HEK293T (cell line): ENCODE measurements at regions of chrX and their contacts with region 1.

Region 1: DNA sequence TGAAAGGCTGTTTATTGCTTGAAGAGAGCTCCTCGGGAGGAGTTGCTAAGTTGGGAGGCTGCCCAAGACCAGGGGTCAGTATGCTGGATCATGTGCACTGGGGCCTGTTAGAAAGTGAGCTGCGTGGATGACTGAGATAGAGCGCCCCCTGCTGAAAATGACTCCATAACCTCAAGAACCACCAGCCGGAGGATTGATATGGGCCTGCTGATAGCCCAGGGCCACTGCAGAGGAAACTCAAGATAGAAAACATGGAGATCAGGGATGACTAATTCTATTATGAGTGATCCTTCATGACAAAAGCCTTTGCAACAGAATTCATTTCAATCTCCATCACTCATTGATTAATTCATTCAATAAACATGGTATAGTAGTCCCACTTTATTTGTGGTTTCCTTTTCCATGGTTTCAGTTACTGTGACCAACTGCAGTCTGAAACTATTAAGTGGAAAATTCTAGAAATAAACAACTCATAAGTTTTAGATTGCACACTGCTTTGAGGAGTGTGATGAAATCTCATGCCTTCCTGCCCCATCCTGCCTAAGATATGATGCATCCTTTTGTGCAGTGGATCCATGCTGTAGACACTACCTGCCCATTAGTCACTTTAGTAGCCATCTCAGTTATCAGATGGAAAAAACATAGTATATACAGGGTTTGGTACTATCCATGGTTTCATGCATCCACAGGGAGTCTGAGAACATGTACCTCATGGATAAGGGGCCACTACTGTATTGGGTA is 126.7 kb upstream of the MBNL3 start:
- DNase-seq: peak; percentile 68

Region 2: DNA sequence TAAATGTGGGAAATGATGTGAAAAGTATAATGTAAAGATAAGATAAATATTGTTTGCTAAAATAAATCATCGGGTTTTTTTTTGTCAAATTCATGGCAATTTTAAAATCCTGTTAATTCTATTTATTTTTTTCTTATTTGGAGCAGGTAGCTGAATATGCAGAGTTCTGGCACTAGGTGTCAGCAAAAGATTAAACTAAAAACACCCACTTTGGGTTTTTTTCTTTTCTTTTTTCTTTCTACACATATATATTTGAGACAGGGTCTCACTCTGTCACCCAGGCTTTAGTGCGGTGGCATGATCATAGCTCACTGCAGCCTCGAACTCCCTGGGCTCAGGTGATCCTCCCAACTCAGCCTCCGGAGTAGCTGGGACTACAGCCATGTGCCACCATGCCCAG is 389.4 kb before region 1 on chrX:
- CTCF ChIA-PET with region 1: interaction called, 13 read pairs
- POLR2A ChIA-PET with region 1: no interaction called
- DNase-seq: no peak

Region 3: DNA sequence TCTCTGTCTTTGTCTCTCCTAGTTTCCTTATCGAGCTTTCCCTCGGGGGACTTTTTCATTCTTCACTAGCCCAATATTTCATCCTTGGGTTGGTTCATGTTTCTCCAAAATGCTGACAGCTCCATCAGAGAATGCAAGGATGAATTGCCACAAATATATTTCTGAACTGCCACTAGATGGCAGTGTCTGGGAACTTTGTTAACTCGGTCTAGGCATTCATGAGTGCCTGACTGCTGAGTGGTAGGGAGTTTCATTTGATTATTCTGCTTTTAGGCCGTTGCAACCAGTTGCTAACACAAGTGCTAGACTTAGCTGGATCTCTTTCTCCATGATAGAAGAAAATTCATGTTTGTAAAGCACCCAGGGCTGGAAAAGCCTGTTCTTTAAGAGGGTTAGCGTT is 322.8 kb before region 1 on chrX:
- CTCF ChIA-PET with region 1: interaction called, 21 read pairs
- POLR2A ChIA-PET with region 1: no interaction called
- DNase-seq: peak; percentile 78

Region 4: DNA sequence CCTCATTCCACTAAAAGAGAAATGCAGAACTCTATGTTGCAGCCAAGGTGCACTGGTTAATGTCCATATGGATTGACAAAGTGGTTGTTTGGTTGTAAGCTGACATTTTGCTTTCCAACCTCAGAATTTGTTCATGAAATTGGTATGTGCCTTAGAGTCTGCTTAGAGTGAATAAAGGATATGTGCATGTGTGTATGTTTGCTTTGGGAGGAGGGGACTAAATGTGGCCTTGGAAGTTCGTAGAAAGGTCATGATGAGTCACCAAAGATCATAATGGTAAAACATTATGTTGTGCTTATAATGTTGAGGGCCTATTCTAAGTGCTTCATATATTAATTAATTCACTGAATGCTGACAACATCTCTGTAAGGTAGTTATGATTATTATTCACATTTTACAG is 82.6 kb before region 1 on chrX:
- CTCF ChIA-PET with region 1: no interaction called
- POLR2A ChIA-PET with region 1: no interaction called
- DNase-seq: no peak